Aorta (tissue), 5 donors: ENCODE measurements at regions of chrX and their contacts with region 1.

Region 1: DNA sequence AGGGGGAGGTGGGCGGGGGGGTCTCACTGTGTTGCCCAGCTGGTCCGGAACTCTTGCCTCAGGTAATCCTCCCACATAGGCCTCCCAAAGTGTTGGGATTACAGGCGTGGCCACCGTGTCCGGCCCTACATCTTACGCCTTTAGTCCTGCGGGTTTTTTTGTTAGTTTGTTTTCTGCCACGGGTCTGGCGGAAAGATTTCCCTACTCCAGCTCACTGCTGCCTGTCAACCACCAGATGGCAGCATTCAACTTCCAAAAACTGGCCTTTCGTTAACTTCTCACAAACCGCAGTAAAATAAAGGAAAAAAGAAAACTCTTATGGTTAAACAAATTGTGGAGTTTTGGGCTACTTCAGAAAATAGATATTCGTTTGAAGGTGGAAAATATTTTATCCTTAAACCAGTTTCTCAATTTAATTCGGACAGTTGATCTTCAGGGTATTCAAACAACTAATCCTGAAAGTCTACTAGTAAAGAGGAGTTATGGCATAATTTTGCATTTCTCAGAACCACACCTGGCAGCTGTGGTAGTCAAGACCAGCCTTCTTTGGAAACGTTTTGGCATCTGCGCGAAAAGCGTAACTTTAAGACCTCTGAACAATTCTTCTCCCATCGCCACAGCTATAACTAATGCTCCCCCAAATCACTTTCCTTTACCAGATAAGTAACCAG is 41.1 kb downstream of the LUZP4 start:
- DNase-seq: peak in 1 of 2 donors; percentile 46
- ATAC-seq: peak; percentile 78
- H3K4me3 ChIP-seq: no peak overlapping the region
- H3K27ac ChIP-seq: no peak overlapping the region
- H3K4me1 ChIP-seq: no peaks in the 10 kb centered on the region
- H3K27me3 ChIP-seq: no peaks in the 10 kb centered on the region

Region 2: GRCh38 chrX:115560978-115561604 is 230.5 kb after region 1 on chrX and contains the start of gene PLS3:
- intact Hi-C with region 1: loop called (anchors 5 kb)
- DNase-seq: peak; percentile 91 to 94
- ATAC-seq: peak; percentile 91
- H3K4me3 ChIP-seq: peak within 1 kb of the TSS; percentile 48 to 49
- H3K27ac ChIP-seq: peak within 1 kb of the TSS; percentile 64 to 86
- H3K4me1 ChIP-seq: no peaks in the 10 kb centered on the region
- H3K27me3 ChIP-seq: no peaks in the 10 kb centered on the region
- total RNA-seq, gene PLS3: 481 to 708 TPM

Region 3: GRCh38 chrX:115642895-115643530 is 312.4 kb after region 1 on chrX:
- intact Hi-C with region 1: loop called in 1 of 2 experiments (anchors 5 kb)
- DNase-seq: no peak
- ATAC-seq: peak; percentile 76
- H3K4me3 ChIP-seq: no peak overlapping the region
- H3K27ac ChIP-seq: no peak overlapping the region
- H3K4me1 ChIP-seq: no peaks in the 10 kb centered on the region
- H3K27me3 ChIP-seq: no peaks in the 10 kb centered on the region

Region 4: GRCh38 chrX:115679460-115679859 is 348.8 kb after region 1 on chrX:
- intact Hi-C with region 1: loop called in 1 of 2 experiments (anchors 5 kb)
- DNase-seq: no peak
- ATAC-seq: no peak
- H3K4me3 ChIP-seq: no peak overlapping the region
- H3K27ac ChIP-seq: no peak overlapping the region
- H3K4me1 ChIP-seq: no peaks in the 10 kb centered on the region
- H3K27me3 ChIP-seq: no peaks in the 10 kb centered on the region

Region 5: GRCh38 chrX:115690511-115691216 is 360.0 kb after region 1 on chrX:
- intact Hi-C with region 1: loop called in 1 of 2 experiments (anchors 5 kb)
- DNase-seq: peak; percentile 40 to 60
- ATAC-seq: peak; percentile 90
- H3K4me3 ChIP-seq: no peak overlapping the region
- H3K27ac ChIP-seq: peak overlapping the region in 1 of 2 donors; percentile 36
- H3K4me1 ChIP-seq: no peaks in the 10 kb centered on the region
- H3K27me3 ChIP-seq: no peaks in the 10 kb centered on the region